ENCODE measurements at regions of chrX and their contacts with region 1.

Region 1: DNA sequence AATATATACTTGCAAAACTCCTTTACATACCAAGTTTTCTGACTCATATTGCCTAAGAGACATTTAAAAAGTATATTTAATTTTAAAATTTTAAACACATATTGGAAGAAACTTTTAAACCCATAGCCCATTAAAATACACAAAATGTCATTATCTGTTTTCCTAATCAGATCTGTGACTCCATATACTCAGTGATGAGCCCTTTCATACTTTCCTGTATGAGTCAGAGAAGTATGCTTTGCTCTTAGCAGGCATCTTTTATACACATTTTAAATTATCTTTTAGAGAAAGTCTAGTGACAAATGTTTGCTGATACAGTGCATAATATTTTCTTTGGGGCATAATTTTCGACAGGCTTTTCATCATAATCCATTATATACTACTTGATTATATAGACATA is 26.4 kb downstream of the SPIN3 start:
- DNase-seq: no peak
- ATAC-seq: no peak
- H3K4me3 ChIP-seq: no peak overlapping the region
- H3K27ac ChIP-seq: no peak overlapping the region
- H3K4me1 ChIP-seq: no peaks in the 10 kb centered on the region
- H3K27me3 ChIP-seq: peaks cover 0 to 46% (median 0%) of the 10 kb centered on the region in 7 donors
- CTCF ChIP-seq: no peak

Region 2: DNA sequence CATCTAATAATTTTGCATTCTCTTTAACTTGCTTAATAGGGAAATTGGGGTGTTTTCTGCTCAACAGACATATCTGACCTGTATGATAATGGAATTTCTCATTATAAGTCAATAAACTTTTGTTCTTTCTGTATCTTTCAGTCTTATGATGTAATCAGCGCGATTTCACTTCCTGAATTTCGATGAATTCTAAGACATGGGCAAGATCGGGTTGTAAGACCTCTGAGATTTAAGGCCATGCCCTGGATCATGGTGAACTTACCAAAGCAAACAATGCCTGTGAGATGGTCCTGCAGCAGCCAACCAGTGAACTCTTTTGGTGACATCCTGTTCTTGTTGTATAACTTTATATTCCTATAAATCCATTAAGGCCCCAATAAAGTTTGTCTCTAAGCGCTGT is 151.8 kb before region 1 on chrX:
- intact Hi-C with region 1: loop called in 1 of 10 experiments (anchors 5 kb)
- DNase-seq: no peak
- ATAC-seq: no peak
- H3K4me3 ChIP-seq: no peak overlapping the region
- H3K27ac ChIP-seq: no peak overlapping the region
- H3K4me1 ChIP-seq: peaks cover 0 to 20% (median 6%) of the 10 kb centered on the region in 9 donors
- H3K27me3 ChIP-seq: peaks cover 0 to 49% (median 0%) of the 10 kb centered on the region in 7 donors
- CTCF ChIP-seq: no peak